Calu3 (cell line): ENCODE measurements at regions of chr7 and their contacts with region 1.

Region 1: DNA sequence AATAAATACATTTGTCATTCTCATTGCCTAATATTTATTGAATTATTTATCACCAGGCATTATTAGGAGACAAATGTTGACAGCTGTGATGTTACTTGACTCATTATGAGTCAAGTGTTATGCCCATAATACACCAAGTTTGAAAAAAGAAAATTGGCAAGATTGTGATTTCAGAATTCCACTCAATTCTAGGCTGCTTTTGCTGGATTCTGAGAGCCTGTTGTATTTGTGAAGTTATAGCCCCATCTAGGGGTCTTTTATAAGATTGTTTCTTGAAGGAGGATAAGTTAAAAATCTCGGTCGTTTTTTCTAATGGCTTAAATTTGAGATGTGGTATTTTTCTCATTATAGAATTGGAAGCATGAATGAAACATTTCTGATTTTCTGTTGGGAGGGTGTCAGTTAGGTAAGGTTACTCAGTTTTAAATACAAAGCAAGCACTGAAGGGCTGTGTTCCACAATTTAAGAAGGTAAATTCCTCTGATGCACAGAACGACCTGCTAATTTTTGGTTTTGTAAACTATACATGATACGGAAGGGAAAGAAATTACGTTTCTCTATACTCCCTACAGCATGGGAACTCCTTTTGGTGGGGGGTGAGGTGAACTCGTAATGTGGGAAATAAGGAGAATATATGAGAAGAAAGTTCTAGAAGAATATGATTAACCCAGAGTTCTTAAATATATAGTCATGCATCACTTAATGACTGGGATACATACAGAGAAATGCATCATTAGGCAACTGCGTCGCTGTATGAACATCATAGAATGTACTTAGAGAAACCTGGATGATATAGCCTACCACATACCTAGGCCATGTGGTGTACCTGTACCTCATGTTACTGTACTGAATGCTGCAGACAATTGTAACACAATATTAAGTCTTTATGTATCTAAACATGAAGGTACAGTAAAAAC is 2.6 kb downstream of the STK31 start:
- DNase-seq: no peak
- H3K4me3 Mint-ChIP-seq: peak overlapping the region; percentile 2
- H3K27ac Mint-ChIP-seq: peak overlapping the region; percentile 35
- H3K4me1 Mint-ChIP-seq: peaks cover 56% of the 10 kb centered on the region
- H3K27me3 Mint-ChIP-seq: no peaks in the 10 kb centered on the region
- CTCF ChIP-seq: peak; percentile 71

Region 2: DNA sequence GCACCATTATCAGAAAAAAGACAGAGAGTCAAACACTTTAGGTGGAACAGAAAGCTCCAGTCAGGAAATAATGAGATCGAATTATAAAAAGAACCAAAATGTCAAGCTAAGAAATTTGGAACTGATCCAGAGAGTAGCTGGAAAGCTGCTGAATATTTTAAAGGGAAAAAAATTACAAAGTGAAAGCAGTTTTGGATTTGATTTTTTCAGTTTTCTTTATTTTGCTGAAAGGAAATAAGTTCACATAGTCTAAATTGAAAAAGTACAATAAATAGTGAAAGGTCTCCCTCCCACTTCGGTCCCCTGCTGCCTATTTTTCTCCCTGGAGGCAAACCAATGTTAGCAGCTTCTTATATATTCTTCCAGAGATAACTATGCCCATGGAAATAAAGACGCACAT is 878.7 kb before region 1 on chr7:
- CTCF ChIA-PET with region 1: no interaction called
- intact Hi-C with region 1: no loop called
- DNase-seq: no peak
- H3K4me3 Mint-ChIP-seq: no peak overlapping the region
- H3K27ac Mint-ChIP-seq: no peak overlapping the region
- H3K4me1 Mint-ChIP-seq: no peaks in the 10 kb centered on the region
- H3K27me3 Mint-ChIP-seq: peaks cover 46% of the 10 kb centered on the region
- CTCF ChIP-seq: no peak

Region 3: DNA sequence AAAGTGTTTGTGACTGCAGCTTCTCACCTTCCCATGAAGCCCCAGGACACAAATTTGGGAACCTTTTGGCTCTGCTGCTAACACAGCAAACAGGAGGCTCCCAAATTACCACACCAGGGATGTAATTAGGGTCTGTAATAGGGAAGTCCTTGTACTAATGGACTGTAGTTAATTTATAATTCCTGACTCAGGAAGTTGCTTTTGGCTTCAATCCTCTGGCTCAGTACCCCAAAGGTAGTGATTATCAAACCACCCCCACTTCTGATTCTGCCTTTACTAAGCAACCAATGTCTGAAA is 417.3 kb before region 1 on chr7:
- CTCF ChIA-PET with region 1: no interaction called
- intact Hi-C with region 1: no loop called
- DNase-seq: no peak
- H3K4me3 Mint-ChIP-seq: no peak overlapping the region
- H3K27ac Mint-ChIP-seq: peak overlapping the region; percentile 38
- H3K4me1 Mint-ChIP-seq: peaks cover 71% of the 10 kb centered on the region
- H3K27me3 Mint-ChIP-seq: no peaks in the 10 kb centered on the region
- CTCF ChIP-seq: no peak

Region 4: GRCh38 chr7:23546897-23547572 is 165.6 kb before region 1 on chr7:
- CTCF ChIA-PET with region 1: interaction called, 13 read pairs
- intact Hi-C with region 1: loop called (anchors 1 kb)
- DNase-seq: peak; percentile 87
- H3K4me3 Mint-ChIP-seq: no peak overlapping the region
- H3K27ac Mint-ChIP-seq: no peak overlapping the region
- H3K4me1 Mint-ChIP-seq: peaks cover 16% of the 10 kb centered on the region
- H3K27me3 Mint-ChIP-seq: no peaks in the 10 kb centered on the region
- CTCF ChIP-seq: peak; percentile 98

Region 5: GRCh38 chr7:23597094-23598091 is 115.2 kb before region 1 on chr7 and contains the start of gene CCDC126:
- CTCF ChIA-PET with region 1: interaction called, 10 read pairs
- intact Hi-C with region 1: no loop called
- DNase-seq: peak; percentile 98
- H3K4me3 Mint-ChIP-seq: peak within 1 kb of the TSS; percentile 87
- H3K27ac Mint-ChIP-seq: peak within 1 kb of the TSS; percentile 68
- H3K4me1 Mint-ChIP-seq: peaks cover 30% of the 10 kb centered on the region
- H3K27me3 Mint-ChIP-seq: no peaks in the 10 kb centered on the region
- CTCF ChIP-seq: no peak
- total RNA-seq, gene CCDC126: 11.0 and 12.3 TPM in 2 replicates

Region 6: GRCh38 chr7:23685731-23686130 is 26.9 kb before region 1 on chr7:
- CTCF ChIA-PET with region 1: interaction called, 3 read pairs
- intact Hi-C with region 1: loop called (anchors 2 kb)
- DNase-seq: peak; percentile 41
- H3K4me3 Mint-ChIP-seq: peak overlapping the region; percentile 65
- H3K27ac Mint-ChIP-seq: peak overlapping the region; percentile 94
- H3K4me1 Mint-ChIP-seq: peaks cover 47% of the 10 kb centered on the region
- H3K27me3 Mint-ChIP-seq: no peaks in the 10 kb centered on the region
- CTCF ChIP-seq: no peak

Region 7: DNA sequence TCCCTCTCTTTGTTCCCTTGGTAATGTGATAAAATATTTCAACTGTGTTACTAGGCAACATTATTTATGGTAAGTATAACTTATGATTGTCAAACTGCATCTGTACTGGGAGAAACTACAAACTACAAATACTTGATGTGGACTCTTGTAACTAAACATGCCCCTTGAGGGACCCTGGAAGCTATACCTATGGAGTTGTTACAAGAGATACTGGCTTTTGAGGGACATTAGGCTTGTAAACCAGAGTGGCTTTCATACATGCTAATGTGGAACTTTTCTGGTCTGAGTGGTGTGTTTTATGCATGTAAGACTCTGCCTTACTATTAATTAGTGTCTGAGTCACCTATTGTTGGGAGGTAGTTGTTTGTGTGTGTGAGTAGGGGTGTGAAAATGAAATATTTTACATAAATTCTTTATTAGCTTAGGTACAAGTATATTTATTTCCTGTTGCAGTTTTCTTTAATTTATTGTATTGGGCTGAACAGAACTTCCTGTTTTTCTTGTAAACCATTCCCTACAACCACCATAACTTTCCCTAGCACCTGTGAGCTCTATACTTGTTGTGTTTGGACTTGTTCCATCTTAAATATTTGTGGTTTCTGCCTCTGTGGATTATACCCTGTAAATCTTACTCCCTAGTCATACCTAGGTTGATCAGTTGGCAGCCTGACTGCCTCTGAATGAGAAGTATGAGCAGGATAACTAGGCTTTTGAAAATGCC is 47.2 kb after region 1 on chr7:
- CTCF ChIA-PET with region 1: interaction called, 8 read pairs
- intact Hi-C with region 1: loop called (anchors 1 kb)
- DNase-seq: peak; percentile 56
- H3K4me3 Mint-ChIP-seq: no peak overlapping the region
- H3K27ac Mint-ChIP-seq: peak overlapping the region; percentile 65
- H3K4me1 Mint-ChIP-seq: peaks cover 31% of the 10 kb centered on the region
- H3K27me3 Mint-ChIP-seq: no peaks in the 10 kb centered on the region
- CTCF ChIP-seq: no peak

Region 8: DNA sequence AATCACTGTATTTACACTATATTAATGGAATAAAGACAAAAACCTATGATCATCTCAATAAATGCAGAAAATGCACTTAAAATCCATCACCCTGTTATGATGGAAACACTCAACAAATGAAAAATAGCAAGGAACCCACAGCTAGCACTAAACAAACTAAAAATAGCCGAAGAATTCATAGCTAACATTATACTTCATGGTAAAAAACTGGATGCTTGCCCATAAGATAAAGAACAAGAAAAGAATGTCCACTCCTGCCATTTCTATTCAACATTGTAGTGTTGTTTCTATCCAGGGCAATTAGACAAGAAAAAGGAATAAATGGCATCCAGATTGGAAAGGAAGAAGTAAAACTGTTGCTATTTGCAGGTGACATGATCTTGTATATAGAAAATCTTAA is 139.5 kb after region 1 on chr7:
- CTCF ChIA-PET with region 1: no interaction called
- intact Hi-C with region 1: no loop called
- DNase-seq: no peak
- H3K4me3 Mint-ChIP-seq: no peak overlapping the region
- H3K27ac Mint-ChIP-seq: no peak overlapping the region
- H3K4me1 Mint-ChIP-seq: no peaks in the 10 kb centered on the region
- H3K27me3 Mint-ChIP-seq: peaks cover 41% of the 10 kb centered on the region
- CTCF ChIP-seq: no peak